Posterior vena cava (tissue), 2 donors: ENCODE measurements at regions of chr15 and their contacts with region 1.

Region 1: GRCh38 chr15:71730277-71731144 is 79.8 kb upstream of the NR2E3 start:
- DNase-seq: no peak

Region 2: GRCh38 chr15:70299931-70300869 is 1430.3 kb before region 1 on chr15:
- intact Hi-C with region 1: no loop called
- DNase-seq: no peak

Region 3: GRCh38 chr15:71448688-71449114 is 281.8 kb before region 1 on chr15:
- intact Hi-C with region 1: loop called (anchors 2 kb)
- DNase-seq: no peak

Region 4: GRCh38 chr15:71565631-71566160 is 164.8 kb before region 1 on chr15:
- intact Hi-C with region 1: no loop called
- DNase-seq: no peak

Region 5: GRCh38 chr15:71666763-71667620 is 63.5 kb before region 1 on chr15:
- intact Hi-C with region 1: no loop called
- DNase-seq: no peak